Activated naive CD4-positive, alpha-beta T cell treated with anti-CD3 and anti-CD28 coated beads for 36 hours (primary cell): ENCODE measurements at regions of chr7 and their contacts with region 1.

Region 1: DNA sequence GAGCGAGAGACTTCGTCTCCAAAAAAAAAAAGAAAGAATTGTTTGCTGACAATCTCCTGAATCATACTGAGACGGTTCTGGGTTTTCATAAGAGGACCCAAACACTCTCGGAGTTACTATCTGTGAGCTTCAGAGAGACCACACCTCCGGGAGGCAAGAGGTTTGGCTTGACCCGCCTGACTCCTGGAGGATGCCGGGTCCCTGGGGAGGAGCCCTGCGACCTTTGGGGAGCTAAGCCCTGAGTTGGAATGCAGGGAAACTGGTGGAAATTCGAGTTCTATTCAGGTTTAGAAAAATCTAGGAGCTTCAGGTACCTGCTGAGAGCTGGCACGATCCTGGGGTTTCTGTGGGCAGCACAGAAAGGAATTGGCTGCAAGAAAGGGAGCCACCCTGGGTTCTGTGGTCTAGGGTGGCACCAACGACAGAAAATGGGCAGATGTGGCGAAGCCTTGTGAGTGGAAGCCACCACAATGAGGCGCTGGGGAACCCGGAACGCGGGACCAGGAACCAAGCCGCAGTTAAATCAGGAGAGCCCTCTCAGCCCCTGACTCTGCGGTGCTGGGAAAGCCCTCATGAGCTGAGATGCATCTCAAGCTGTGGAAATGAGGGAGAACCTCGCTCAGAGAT is 21.8 kb upstream of the GATAD1 start:
- DNase-seq: peak; percentile 20
- H3K4me3 Mint-ChIP-seq: peak overlapping the region; percentile 19
- H3K27ac Mint-ChIP-seq: no peak overlapping the region
- H3K4me1 Mint-ChIP-seq: peaks cover 11% of the 10 kb centered on the region
- H3K27me3 Mint-ChIP-seq: peaks cover 14% of the 10 kb centered on the region

Region 2: DNA sequence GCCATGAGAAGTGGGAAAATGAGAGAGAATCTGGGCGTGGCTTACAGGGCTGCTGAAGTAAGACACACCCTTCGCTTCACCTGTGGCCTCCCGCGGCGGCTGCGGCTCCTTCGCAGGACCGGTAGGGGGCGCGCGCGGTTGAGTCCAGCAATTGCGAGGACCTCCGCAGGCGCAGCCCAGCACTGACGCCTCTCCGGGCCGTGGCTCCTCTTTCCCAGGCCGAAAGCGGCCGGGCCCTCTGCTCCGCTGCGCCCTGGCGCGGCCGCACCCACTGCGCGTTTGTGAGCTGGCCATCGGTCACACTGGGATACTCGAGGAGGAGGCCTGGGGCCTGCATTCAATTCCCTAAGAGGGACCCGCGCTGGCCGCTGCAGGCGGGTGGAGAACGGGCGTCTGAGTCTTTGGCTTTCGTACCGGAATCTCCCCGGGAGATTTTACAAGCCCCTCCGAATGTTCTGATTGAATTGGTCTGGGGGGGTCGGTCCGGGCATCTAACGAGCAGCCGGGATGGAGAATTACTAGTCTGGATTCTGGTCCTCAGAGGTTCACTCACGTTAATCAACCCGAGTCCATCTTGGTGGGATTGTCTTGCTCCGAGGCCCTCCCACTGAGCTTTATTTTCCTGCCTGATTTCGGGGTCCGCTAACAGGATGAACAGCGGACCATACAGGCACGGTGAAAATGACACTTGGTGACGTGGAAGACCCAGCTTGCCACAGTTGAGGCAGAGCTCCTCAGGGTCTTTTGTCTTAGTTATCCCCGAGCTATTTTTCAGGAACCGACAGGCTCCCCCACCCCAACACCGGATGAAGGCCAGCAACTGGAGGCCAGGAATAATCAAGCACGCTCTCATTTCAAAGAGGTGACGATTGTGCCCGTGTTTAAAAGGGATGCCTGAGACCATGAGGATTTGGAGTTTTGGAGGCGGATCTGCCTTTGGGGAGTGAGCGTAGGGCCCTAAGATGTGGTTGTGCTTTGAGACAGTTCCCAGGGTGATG is 246.2 kb before region 1 on chr7 and contains the start of gene LRRD1:
- CTCF ChIA-PET with region 1: interaction called, 4 read pairs
- intact Hi-C with region 1: loop called (anchors 1 kb)
- DNase-seq: peak; percentile 94
- H3K4me3 Mint-ChIP-seq: peak within 1 kb of the TSS; percentile 72
- H3K27ac Mint-ChIP-seq: no peak within 1 kb of the TSS
- H3K4me1 Mint-ChIP-seq: peaks cover 10% of the 10 kb centered on the region
- H3K27me3 Mint-ChIP-seq: peaks cover 3% of the 10 kb centered on the region
- total RNA-seq, gene LRRD1: not detected

Region 3: GRCh38 chr7:93249491-93250148 is 824.2 kb after region 1 on chr7:
- CTCF ChIA-PET with region 1: no interaction called
- intact Hi-C with region 1: no loop called
- DNase-seq: no peak
- H3K4me3 Mint-ChIP-seq: no peak overlapping the region
- H3K27ac Mint-ChIP-seq: no peak overlapping the region
- H3K4me1 Mint-ChIP-seq: peaks cover 6% of the 10 kb centered on the region
- H3K27me3 Mint-ChIP-seq: no peaks in the 10 kb centered on the region